Activated CD4-positive, alpha-beta T cell treated with anti-CD3 and anti-CD28 coated beads for 36 hours (primary cell): ENCODE measurements at regions of chr10 and their contacts with region 1.

Region 1: DNA sequence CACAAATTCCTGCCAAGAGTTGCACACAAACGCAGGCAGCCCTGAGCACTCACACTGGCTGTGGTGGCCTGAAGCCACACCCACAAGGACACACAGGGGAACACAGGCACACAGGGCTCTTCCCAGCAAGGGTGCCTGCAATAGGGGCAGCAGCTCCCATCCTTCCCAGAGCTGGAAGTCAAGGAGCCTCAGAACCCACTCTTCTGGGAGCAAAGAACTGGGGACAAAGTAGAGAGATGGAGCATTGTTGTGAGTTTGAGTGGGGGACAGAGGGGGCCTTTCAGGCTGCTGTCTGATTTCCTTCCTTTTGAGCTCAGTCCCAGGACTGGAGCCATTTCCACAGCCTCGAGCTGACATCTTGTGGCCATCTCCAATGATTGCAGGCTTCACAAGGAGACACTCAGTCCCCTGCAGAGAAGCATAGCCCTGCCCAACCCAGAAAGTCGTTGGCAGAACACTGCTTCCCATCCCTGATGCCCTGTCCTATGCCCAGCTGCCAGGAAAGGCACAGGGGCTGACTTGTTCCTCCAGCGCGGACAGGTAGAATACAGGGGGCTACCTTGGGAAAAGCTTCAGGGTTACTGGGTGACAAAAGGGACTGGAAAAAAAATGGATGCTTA is 34.4 kb upstream of the SLF2 start:
- DNase-seq: peak; percentile 63
- ATAC-seq: peak; percentile 86
- H3K4me3 Mint-ChIP-seq: no peak overlapping the region
- H3K27ac Mint-ChIP-seq: no peak overlapping the region
- H3K4me1 Mint-ChIP-seq: peaks cover 4% of the 10 kb centered on the region
- H3K27me3 Mint-ChIP-seq: peaks cover 7% of the 10 kb centered on the region

Region 2: GRCh38 chr10:100433253-100434240 is 444.9 kb before region 1 on chr10:
- CTCF ChIA-PET with region 1: interaction called, 5 read pairs
- POLR2A ChIA-PET with region 1: no interaction called
- intact Hi-C with region 1: loop called in 1 of 2 experiments (anchors 10 kb)
- DNase-seq: peak; percentile 98
- ATAC-seq: peak; percentile 98
- H3K4me3 Mint-ChIP-seq: peak overlapping the region; percentile 7
- H3K27ac Mint-ChIP-seq: no peak overlapping the region
- H3K4me1 Mint-ChIP-seq: peaks cover 5% of the 10 kb centered on the region
- H3K27me3 Mint-ChIP-seq: peaks cover 2% of the 10 kb centered on the region

Region 3: GRCh38 chr10:100448951-100449350 is 429.4 kb before region 1 on chr10:
- CTCF ChIA-PET with region 1: no interaction called
- POLR2A ChIA-PET with region 1: no interaction called
- intact Hi-C with region 1: no loop called
- DNase-seq: no peak
- ATAC-seq: no peak
- H3K4me3 Mint-ChIP-seq: no peak overlapping the region
- H3K27ac Mint-ChIP-seq: no peak overlapping the region
- H3K4me1 Mint-ChIP-seq: no peaks in the 10 kb centered on the region
- H3K27me3 Mint-ChIP-seq: peaks cover 8% of the 10 kb centered on the region

Region 4: DNA sequence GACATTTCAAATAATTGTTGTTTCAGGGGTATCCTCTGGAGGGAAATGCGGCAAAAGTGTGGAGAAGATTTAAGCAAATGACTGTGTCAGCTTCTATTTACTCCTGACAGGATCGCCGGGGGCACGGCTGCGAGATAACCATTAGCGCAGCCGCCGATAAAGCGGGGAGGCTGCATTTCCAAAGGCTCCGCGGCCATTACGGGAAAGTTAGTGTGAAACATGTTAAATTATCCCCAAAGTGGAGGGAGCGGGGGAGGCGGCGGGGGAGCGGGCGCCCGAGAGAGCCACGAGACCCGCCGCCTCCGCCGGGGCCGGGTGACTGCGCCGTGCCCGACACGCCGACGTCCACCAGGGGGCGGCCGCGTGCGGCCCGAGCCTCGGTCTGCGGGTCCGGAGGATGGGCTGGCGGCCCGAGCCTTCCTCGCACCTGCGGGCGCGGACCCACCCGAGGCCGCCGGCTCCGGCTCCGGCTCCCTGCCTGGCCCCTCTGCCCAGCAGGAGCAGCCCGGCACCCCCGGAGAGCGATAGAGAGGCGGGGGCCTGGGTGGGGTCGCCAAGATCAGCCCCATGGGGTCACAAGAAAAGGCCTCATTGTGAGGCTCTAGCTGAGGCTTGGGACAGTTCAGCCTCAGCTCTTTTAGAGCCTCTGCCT is 207.4 kb before region 1 on chr10:
- CTCF ChIA-PET with region 1: interaction called, 7 read pairs
- POLR2A ChIA-PET with region 1: no interaction called
- intact Hi-C with region 1: loop called in 1 of 2 experiments (anchors 2 kb)
- DNase-seq: peak; percentile 81
- ATAC-seq: peak; percentile 95
- H3K4me3 Mint-ChIP-seq: no peak overlapping the region
- H3K27ac Mint-ChIP-seq: no peak overlapping the region
- H3K4me1 Mint-ChIP-seq: peaks cover 3% of the 10 kb centered on the region
- H3K27me3 Mint-ChIP-seq: peaks cover 64% of the 10 kb centered on the region

Region 5: DNA sequence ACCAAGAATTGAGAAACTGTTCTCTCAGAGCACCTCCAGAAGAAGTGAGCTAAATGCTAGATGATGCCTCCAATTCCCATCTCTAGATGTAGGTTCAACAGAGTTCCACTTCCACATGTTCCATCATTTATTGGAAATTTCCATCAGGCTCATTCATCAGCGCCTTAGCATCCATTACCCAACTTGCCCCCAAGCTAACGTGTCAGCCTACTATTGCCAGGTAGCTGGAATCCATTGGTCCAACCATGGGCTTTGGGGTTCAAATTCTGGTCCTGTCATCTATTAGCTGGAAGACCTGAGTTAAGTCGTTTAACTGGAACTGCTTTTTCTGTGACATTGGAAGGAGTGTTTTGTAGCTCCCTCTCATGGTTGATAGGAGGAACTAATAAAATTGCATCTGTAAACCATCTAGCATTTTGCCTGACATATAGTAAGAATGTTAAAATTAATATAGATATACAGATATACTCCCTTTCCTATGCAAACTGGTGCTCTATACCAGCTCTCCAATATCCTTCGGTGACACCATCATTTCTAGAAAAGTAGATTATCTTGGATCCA is 10.5 kb after region 1 on chr10:
- CTCF ChIA-PET with region 1: interaction called, 12 read pairs
- POLR2A ChIA-PET with region 1: no interaction called
- intact Hi-C with region 1: no loop called
- DNase-seq: no peak
- ATAC-seq: no peak
- H3K4me3 Mint-ChIP-seq: no peak overlapping the region
- H3K27ac Mint-ChIP-seq: no peak overlapping the region
- H3K4me1 Mint-ChIP-seq: peaks cover 4% of the 10 kb centered on the region
- H3K27me3 Mint-ChIP-seq: peaks cover 21% of the 10 kb centered on the region